Naive thymus-derived CD4-positive, alpha-beta T cell (primary cell): ENCODE measurements at regions of chr10 and their contacts with region 1.

Region 1: GRCh38 chr10:12448729-12449391 is 99.5 kb downstream of the CAMK1D start:
- DNase-seq: peak; percentile 33 to 90 (median 82)
- ATAC-seq: peak; percentile 95
- H3K4me3 ChIP-seq: peak overlapping the region; percentile 5
- H3K4me3 Mint-ChIP-seq: peak overlapping the region; percentile 65 to 80 (median 70)
- H3K27ac ChIP-seq: no peak overlapping the region
- H3K27ac Mint-ChIP-seq: peak overlapping the region; percentile 89 to 97 (median 93)
- H3K4me1 ChIP-seq: peaks cover 9 to 15% of the 10 kb centered on the region in 2 donors
- H3K4me1 Mint-ChIP-seq: peaks cover 17 to 69% (median 50%) of the 10 kb centered on the region in 7 donors
- H3K27me3 ChIP-seq: no peaks in the 10 kb centered on the region
- H3K27me3 Mint-ChIP-seq: peaks cover 0 to 45% (median 0%) of the 10 kb centered on the region in 5 donors

Region 2: DNA sequence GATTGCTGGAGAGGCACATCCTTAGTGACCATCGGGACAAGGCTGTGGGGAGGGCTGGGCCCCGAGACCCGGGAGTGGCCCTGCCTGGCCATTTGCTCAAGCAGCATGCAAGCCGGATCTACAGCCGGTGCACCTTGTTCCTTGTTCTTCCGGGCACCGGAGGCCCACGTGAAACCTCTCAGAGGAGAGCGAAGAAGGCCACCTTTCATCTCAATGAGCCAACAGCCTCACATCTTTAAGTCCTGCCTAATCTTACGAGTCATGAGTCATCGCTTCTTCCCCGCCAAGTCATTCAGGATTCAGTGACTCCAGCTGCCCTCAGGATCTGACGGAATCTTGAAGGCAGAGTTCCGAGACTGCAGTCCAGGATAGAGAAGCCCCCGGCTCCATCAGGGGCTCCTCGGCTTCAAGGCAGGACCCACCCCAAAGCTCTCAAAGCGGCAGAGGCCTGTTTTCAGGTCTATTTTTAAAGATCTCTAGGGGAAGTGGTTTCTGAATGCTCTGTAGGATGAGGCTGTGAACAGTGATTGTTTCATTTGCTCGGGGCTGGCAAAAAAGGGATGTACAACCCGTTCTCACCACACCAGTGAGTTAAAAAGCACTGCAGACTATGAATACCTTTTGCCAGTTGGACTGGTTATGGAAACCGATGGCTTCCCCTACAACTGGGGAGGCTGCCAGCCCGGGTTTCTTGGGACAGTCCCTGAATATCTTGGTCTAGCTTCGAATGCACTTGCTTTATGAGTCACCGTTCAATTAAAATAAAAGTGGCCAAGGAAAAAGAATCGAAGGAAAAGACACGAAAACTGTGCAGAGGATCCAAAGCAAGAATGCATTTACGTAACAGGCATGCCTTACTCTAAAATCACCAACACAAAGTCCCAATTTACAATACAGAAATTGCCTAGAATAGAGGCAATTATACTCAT is 763.9 kb before region 1 on chr10:
- CTCF ChIA-PET with region 1: no interaction called
- POLR2A ChIA-PET with region 1: no interaction called
- intact Hi-C with region 1: loop called in 1 of 2 experiments (anchors 10 kb)
- DNase-seq: peak; percentile 45 to 89 (median 83)
- ATAC-seq: peak; percentile 86
- H3K4me3 ChIP-seq: peak overlapping the region; percentile 49
- H3K4me3 Mint-ChIP-seq: peak overlapping the region; percentile 82 to 91 (median 89)
- H3K27ac ChIP-seq: peak overlapping the region; percentile 78
- H3K27ac Mint-ChIP-seq: peak overlapping the region; percentile 92 to 99 (median 97)
- H3K4me1 ChIP-seq: peaks cover 26 to 51% of the 10 kb centered on the region in 2 donors
- H3K4me1 Mint-ChIP-seq: peaks cover 25 to 85% (median 78%) of the 10 kb centered on the region in 7 donors
- H3K27me3 ChIP-seq: no peaks in the 10 kb centered on the region
- H3K27me3 Mint-ChIP-seq: peaks cover 0 to 67% (median 0%) of the 10 kb centered on the region in 5 donors

Region 3: GRCh38 chr10:12068449-12069269 is 380.2 kb before region 1 on chr10 and contains the start of gene DHTKD1:
- CTCF ChIA-PET with region 1: no interaction called
- POLR2A ChIA-PET with region 1: no interaction called
- intact Hi-C with region 1: loop called in 1 of 2 experiments (anchors 2 kb)
- DNase-seq: peak; percentile 96 to 100 (median 98)
- ATAC-seq: peak; percentile 99
- H3K4me3 ChIP-seq: peak within 1 kb of the TSS; percentile 85
- H3K4me3 Mint-ChIP-seq: peak within 1 kb of the TSS; percentile 84 to 92 (median 88)
- H3K27ac ChIP-seq: peak within 1 kb of the TSS; percentile 85
- H3K27ac Mint-ChIP-seq: peak within 1 kb of the TSS; percentile 85 to 99 (median 95)
- H3K4me1 ChIP-seq: peaks cover 6 to 15% of the 10 kb centered on the region in 2 donors
- H3K4me1 Mint-ChIP-seq: peaks cover 12 to 27% (median 20%) of the 10 kb centered on the region in 7 donors
- H3K27me3 ChIP-seq: no peaks in the 10 kb centered on the region
- H3K27me3 Mint-ChIP-seq: no peaks in the 10 kb centered on the region
- total RNA-seq, gene DHTKD1: 10.8 to 25.9 (median 12.5) TPM

Region 4: GRCh38 chr10:12369982-12370381 is 78.9 kb before region 1 on chr10:
- CTCF ChIA-PET with region 1: no interaction called
- POLR2A ChIA-PET with region 1: no interaction called
- intact Hi-C with region 1: loop called in 1 of 2 experiments (anchors 1 kb)
- DNase-seq: no peak
- ATAC-seq: no peak
- H3K4me3 ChIP-seq: no peak overlapping the region
- H3K4me3 Mint-ChIP-seq: no peak overlapping the region
- H3K27ac ChIP-seq: no peak overlapping the region
- H3K27ac Mint-ChIP-seq: no peak overlapping the region
- H3K4me1 ChIP-seq: peaks cover 9 to 14% of the 10 kb centered on the region in 2 donors
- H3K4me1 Mint-ChIP-seq: peaks cover 13 to 40% (median 27%) of the 10 kb centered on the region in 7 donors
- H3K27me3 ChIP-seq: no peaks in the 10 kb centered on the region
- H3K27me3 Mint-ChIP-seq: no peaks in the 10 kb centered on the region

Region 5: DNA sequence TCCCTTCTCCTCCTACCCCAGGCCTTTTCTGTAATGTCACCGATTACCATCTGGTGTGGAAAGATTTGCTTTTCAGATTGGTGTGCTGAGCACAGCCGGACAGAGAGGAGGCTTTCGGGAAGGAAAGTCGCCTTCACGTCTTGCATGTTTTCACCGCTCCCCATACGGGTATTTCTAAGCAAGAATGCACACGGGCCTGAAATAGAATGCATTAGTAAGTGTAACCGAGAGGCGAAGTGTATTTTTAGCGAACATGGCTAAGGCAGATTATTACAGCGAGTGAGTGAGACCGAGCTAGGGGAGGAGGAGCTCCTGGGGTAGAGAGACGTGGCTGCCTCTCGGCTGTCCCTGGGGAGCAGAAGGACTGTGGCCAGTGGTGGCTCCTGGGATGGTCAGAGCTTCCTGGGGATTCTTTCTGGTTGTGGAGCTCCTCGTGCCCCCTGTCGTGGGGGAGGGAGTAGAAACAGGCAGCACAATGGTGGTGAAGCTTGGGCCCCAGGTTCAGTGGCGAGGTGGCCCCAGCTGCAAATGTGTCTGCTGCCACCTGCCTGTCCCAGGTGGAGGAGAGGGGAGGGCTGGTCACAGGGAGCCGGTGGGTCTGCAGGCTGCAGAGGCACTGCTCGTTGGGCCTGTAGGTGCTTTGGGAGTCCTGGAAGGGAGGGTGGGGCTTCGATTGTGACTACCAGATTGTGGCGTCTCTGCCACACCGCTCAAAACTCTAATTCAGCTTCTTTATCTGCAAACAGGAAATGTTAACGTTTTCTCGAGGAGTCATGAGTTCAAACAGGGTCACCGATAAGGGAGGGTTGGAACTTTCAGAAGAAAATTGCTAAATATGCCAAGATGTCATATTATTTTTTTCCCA is 36.3 kb after region 1 on chr10:
- CTCF ChIA-PET with region 1: no interaction called
- POLR2A ChIA-PET with region 1: no interaction called
- intact Hi-C with region 1: loop called in 1 of 2 experiments (anchors 2 kb)
- DNase-seq: peak in 7 of 9 donors; percentile 13 to 38 (median 27)
- ATAC-seq: peak; percentile 70
- H3K4me3 ChIP-seq: no peak overlapping the region
- H3K4me3 Mint-ChIP-seq: peak overlapping the region; percentile 45 to 77 (median 71)
- H3K27ac ChIP-seq: no peak overlapping the region
- H3K27ac Mint-ChIP-seq: peak overlapping the region; percentile 61 to 90 (median 84)
- H3K4me1 ChIP-seq: peaks cover 0 to 24% of the 10 kb centered on the region in 2 donors
- H3K4me1 Mint-ChIP-seq: peaks cover 15 to 70% (median 47%) of the 10 kb centered on the region in 7 donors
- H3K27me3 ChIP-seq: no peaks in the 10 kb centered on the region
- H3K27me3 Mint-ChIP-seq: no peaks in the 10 kb centered on the region

Region 6: DNA sequence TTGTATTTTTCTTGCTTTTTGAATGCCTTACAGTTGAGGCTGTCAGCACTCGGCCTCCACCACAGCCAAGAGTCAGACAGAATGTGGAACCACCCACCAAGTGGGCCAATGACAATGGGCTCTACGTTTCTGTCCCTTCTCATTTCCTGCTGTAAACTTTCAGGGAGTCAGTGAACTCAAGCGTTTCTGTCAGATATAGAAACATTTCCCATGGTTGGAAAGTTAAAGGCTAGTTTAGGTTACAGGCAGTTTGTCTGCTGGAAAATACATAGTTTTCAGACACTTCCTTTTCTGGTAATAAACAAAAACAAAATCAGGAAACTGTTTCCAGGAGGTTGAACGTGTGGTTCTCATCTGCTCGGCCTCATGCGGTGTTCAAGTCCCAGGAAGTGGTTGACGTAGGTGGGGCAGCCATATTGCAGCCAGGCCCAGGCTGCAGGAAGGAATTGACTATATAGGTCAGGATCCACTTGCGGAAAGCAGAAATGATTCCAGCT is 145.6 kb after region 1 on chr10:
- CTCF ChIA-PET with region 1: no interaction called
- POLR2A ChIA-PET with region 1: no interaction called
- intact Hi-C with region 1: loop called (anchors 1 to 5 kb)
- DNase-seq: peak in 8 of 9 donors; percentile 25 to 66 (median 52)
- ATAC-seq: peak; percentile 78
- H3K4me3 ChIP-seq: no peak overlapping the region
- H3K4me3 Mint-ChIP-seq: peak overlapping the region; percentile 61 to 90 (median 72)
- H3K27ac ChIP-seq: peak overlapping the region; percentile 41
- H3K27ac Mint-ChIP-seq: peak overlapping the region; percentile 90 to 99 (median 94)
- H3K4me1 ChIP-seq: peaks cover 15 to 65% of the 10 kb centered on the region in 2 donors
- H3K4me1 Mint-ChIP-seq: peaks cover 43 to 100% (median 94%) of the 10 kb centered on the region in 7 donors
- H3K27me3 ChIP-seq: no peaks in the 10 kb centered on the region
- H3K27me3 Mint-ChIP-seq: no peaks in the 10 kb centered on the region

Region 7: GRCh38 chr10:12638103-12638502 is 189.2 kb after region 1 on chr10:
- CTCF ChIA-PET with region 1: no interaction called
- POLR2A ChIA-PET with region 1: no interaction called
- intact Hi-C with region 1: loop called in 1 of 2 experiments (anchors 1 kb)
- DNase-seq: peak in 1 of 9 donors; percentile 14
- ATAC-seq: no peak
- H3K4me3 ChIP-seq: no peak overlapping the region
- H3K4me3 Mint-ChIP-seq: peak overlapping the region in 8 of 10 donors; percentile 1 to 69 (median 24)
- H3K27ac ChIP-seq: no peak overlapping the region
- H3K27ac Mint-ChIP-seq: peak overlapping the region in 6 of 9 donors; percentile 16 to 90 (median 54)
- H3K4me1 ChIP-seq: peaks cover 0 to 20% of the 10 kb centered on the region in 2 donors
- H3K4me1 Mint-ChIP-seq: peaks cover 24 to 63% (median 51%) of the 10 kb centered on the region in 7 donors
- H3K27me3 ChIP-seq: no peaks in the 10 kb centered on the region
- H3K27me3 Mint-ChIP-seq: no peaks in the 10 kb centered on the region